Calu3 (cell line): ENCODE measurements at regions of chr2 and their contacts with region 1.

Region 1: GRCh38 chr2:179936654-179937053 is 70.4 kb downstream of the CWC22 start:
- DNase-seq: peak; percentile 76
- H3K4me3 Mint-ChIP-seq: no peak overlapping the region
- H3K27ac Mint-ChIP-seq: no peak overlapping the region
- H3K4me1 Mint-ChIP-seq: no peaks in the 10 kb centered on the region
- H3K27me3 Mint-ChIP-seq: no peaks in the 10 kb centered on the region
- CTCF ChIP-seq: peak; percentile 66

Region 2: GRCh38 chr2:179422037-179422643 is 514.5 kb before region 1 on chr2:
- CTCF ChIA-PET with region 1: no interaction called
- intact Hi-C with region 1: loop called (anchors 5 kb)
- DNase-seq: peak; percentile 85
- H3K4me3 Mint-ChIP-seq: no peak overlapping the region
- H3K27ac Mint-ChIP-seq: no peak overlapping the region
- H3K4me1 Mint-ChIP-seq: peaks cover 6% of the 10 kb centered on the region
- H3K27me3 Mint-ChIP-seq: no peaks in the 10 kb centered on the region
- CTCF ChIP-seq: peak; percentile 84

Region 3: GRCh38 chr2:179842498-179843153 is 94.0 kb before region 1 on chr2:
- CTCF ChIA-PET with region 1: no interaction called
- intact Hi-C with region 1: loop called (anchors 5 kb)
- DNase-seq: peak; percentile 30
- H3K4me3 Mint-ChIP-seq: no peak overlapping the region
- H3K27ac Mint-ChIP-seq: no peak overlapping the region
- H3K4me1 Mint-ChIP-seq: no peaks in the 10 kb centered on the region
- H3K27me3 Mint-ChIP-seq: peaks cover 22% of the 10 kb centered on the region
- CTCF ChIP-seq: peak; percentile 35